ENCODE measurements at regions of chr2 and their contacts with region 1.

Region 1: GRCh38 chr2:241149925-241150659 is at the start of gene PPP1R7:
- DNase-seq: peak; percentile 91
- H3K4me3 Mint-ChIP-seq: peak within 1 kb of the TSS; percentile 95
- H3K27ac Mint-ChIP-seq: peak within 1 kb of the TSS; percentile 95
- H3K4me1 Mint-ChIP-seq: peaks cover 61% of the 10 kb centered on the region
- H3K27me3 Mint-ChIP-seq: no peaks in the 10 kb centered on the region
- total RNA-seq, gene PPP1R7: 115 and 118 TPM in 2 replicates

Region 2: DNA sequence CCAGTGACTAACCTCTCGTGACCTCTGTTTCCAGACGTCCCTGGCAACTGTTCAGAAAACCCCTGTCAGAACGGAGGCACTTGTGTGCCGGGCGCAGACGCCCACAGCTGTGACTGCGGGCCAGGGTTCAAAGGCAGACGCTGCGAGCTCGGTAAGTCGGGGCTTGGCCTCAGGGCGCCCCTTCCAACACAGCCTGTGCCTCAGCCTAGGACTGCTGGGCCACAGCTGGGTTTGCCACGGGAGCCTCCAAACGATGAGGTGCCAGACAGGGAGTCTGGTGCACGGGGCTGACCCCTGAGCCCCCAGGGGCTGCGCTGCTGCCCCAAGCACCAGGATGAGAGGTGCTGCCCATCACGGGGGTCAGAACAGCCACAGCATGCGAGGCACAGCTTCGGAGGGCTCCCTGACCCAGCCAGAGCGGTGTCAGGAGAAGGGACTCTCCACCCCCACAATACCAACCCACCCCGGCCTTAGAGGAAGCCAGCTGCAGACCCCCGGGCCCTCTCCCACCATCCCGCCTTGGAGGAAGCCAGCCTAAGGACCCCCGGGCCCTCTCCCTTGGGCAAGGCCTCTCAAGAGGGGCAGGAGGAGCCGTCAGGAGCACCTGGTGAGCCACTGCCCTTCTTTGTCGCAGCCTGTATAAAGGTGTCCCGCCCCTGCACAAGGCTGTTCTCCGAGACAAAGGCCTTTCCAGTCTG is 68.3 kb before region 1 on chr2:
- intact Hi-C with region 1: loop called (anchors 1 kb)
- DNase-seq: no peak
- H3K4me3 Mint-ChIP-seq: no peak overlapping the region
- H3K27ac Mint-ChIP-seq: no peak overlapping the region
- H3K4me1 Mint-ChIP-seq: no peaks in the 10 kb centered on the region
- H3K27me3 Mint-ChIP-seq: no peaks in the 10 kb centered on the region

Region 3: GRCh38 chr2:241102239-241102803 is 47.8 kb before region 1 on chr2 and contains the start of gene MTERF4:
- intact Hi-C with region 1: loop called (anchors 1 kb)
- DNase-seq: peak; percentile 86
- H3K4me3 Mint-ChIP-seq: peak within 1 kb of the TSS; percentile 94
- H3K27ac Mint-ChIP-seq: peak within 1 kb of the TSS; percentile 98
- H3K4me1 Mint-ChIP-seq: peaks cover 41% of the 10 kb centered on the region
- H3K27me3 Mint-ChIP-seq: no peaks in the 10 kb centered on the region
- total RNA-seq, gene MTERF4: 40.5 and 43.3 TPM in 2 replicates

Region 4: GRCh38 chr2:241126771-241127202 is 23.3 kb before region 1 on chr2:
- intact Hi-C with region 1: loop called (anchors 1 kb)
- DNase-seq: no peak
- H3K4me3 Mint-ChIP-seq: peak overlapping the region; percentile 71
- H3K27ac Mint-ChIP-seq: peak overlapping the region; percentile 98
- H3K4me1 Mint-ChIP-seq: peaks cover 49% of the 10 kb centered on the region
- H3K27me3 Mint-ChIP-seq: no peaks in the 10 kb centered on the region

Region 5: GRCh38 chr2:241217320-241218031 is 67.4 kb after region 1 on chr2:
- intact Hi-C with region 1: loop called (anchors 2 kb)
- DNase-seq: peak; percentile 20
- H3K4me3 Mint-ChIP-seq: peak overlapping the region; percentile 63
- H3K27ac Mint-ChIP-seq: no peak overlapping the region
- H3K4me1 Mint-ChIP-seq: peaks cover 18% of the 10 kb centered on the region
- H3K27me3 Mint-ChIP-seq: peaks cover 25% of the 10 kb centered on the region

Region 6: DNA sequence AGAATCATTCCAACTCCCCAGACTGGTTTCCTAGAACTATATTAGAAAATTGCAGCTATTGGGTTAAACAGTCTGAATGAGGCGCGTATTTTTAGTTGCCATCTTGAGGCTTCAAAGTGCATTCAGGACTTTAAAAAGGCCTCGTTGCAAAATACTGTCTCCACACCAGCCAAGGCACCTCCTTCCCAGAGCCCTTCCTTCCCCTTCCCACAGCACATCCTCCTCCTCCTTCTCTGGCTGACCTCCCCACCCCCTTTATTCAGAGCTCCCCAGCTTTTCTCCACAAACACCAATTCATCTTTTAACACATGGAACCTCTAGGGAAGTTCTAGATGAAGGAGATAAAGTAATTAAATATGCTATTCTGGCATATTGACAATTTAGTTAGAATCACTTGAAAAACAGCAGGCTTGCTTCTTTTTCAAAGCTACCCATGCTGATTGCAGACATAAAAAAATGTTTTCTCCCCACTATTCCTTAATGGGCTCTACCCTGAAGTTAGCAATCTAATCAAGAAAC is 809.7 kb after region 1 on chr2:
- intact Hi-C with region 1: no loop called
- DNase-seq: no peak
- H3K4me3 Mint-ChIP-seq: no peak overlapping the region
- H3K27ac Mint-ChIP-seq: no peak overlapping the region
- H3K4me1 Mint-ChIP-seq: no peaks in the 10 kb centered on the region
- H3K27me3 Mint-ChIP-seq: no peaks in the 10 kb centered on the region